ENCODE measurements at regions of chr18 and their contacts with region 1.

Region 1: DNA sequence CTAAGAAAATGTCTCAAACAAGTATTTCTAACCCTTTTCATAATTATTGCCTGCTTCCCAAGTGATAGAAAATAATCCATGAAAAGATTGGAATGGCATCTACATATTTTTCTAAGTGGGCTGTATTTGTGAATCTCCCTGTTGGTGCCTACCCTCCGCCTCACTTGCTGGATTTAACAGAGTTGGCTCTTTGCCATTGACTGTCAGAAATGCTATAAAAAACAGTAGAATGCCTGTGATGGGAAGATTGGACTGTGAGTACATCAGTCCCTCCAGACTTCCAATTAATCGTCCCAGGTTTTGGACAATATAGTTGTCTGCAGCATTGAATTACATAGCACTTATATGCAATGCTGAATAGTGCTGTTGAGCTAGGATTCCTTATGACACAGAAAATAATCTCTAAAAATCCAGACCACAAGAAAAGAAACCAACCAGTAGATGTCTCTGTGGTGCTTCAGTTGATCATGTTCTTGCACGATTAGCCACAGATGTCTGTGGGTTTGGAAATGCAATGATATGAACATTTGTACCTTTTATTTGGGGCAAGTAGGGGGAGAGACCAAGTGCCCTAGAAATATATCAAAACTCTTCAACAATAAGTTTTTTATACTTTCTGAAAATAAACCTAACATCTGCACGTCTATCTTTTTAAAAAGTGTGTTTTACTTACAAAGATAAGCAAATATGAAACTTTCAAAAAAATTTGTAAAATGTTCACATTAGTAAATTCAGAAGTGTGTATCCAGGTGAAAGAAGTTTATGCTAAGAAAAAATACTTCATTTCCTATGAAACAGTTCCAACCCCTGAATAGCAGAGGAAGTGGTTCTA is 88.5 kb downstream of the DYNAP start:
- DNase-seq: no peak
- H3K4me3 Mint-ChIP-seq: no peak overlapping the region
- H3K27ac Mint-ChIP-seq: no peak overlapping the region
- H3K4me1 Mint-ChIP-seq: peaks cover 4% of the 10 kb centered on the region
- H3K27me3 Mint-ChIP-seq: peaks cover 3% of the 10 kb centered on the region

Region 2: DNA sequence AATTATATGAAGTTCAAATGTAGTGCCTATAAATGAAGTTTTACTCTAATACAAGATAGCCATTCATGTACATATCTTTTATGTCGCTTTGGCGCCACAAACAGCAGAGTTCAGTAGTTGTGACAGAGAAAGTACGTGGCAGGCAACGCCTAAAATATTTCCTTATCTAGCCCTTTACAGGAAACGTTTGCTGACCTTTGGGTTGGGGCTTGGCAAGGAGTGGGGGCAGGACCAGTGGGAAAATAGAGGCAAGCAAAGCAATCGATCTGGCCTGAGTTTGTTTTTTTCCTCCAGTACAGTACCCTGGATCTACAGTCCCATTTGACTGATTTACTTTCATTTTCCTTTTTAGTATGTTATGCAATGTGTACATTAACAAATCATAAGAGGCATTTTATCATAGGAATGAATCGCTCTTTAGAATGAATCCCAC is 266.6 kb after region 1 on chr18:
- CTCF ChIA-PET with region 1: interaction called, 4 read pairs
- intact Hi-C with region 1: loop called (anchors 1 kb)
- DNase-seq: peak; percentile 28
- H3K4me3 Mint-ChIP-seq: peak overlapping the region; percentile 82
- H3K27ac Mint-ChIP-seq: peak overlapping the region; percentile 73
- H3K4me1 Mint-ChIP-seq: peaks cover 14% of the 10 kb centered on the region
- H3K27me3 Mint-ChIP-seq: no peaks in the 10 kb centered on the region

Region 3: DNA sequence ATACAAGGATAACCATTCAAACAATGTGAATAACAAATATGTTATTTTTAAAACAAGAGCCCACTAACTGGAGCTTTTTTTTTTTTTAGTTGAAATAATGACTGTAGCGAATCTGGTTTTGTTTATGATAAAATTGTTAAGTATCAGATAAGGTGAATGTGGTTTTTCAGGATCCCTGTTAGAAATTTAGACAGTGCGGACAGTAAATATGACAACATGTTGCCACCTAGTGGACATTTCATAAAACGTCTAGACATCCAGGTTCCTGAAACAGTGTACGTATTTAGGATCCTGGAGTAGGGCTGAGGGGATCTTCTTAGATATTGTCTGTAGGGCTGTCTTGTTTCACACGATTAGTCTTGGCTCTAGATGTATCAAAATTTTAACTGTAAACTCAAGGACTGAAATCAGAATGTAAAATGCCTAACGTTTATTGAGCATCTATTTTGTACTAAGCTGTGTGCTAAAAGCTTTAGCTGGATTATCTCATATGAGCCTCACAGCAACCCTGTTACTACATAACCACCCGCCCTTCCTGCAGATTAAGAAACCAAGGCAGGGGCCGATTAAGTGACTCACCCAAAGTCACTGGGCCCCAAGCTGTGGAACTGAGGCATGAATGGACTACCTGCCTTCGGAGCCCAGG is 303.6 kb after region 1 on chr18:
- CTCF ChIA-PET with region 1: interaction called, 16 read pairs
- intact Hi-C with region 1: loop called (anchors 1 kb)
- DNase-seq: no peak
- H3K4me3 Mint-ChIP-seq: no peak overlapping the region
- H3K27ac Mint-ChIP-seq: no peak overlapping the region
- H3K4me1 Mint-ChIP-seq: no peaks in the 10 kb centered on the region
- H3K27me3 Mint-ChIP-seq: no peaks in the 10 kb centered on the region

Measured in activated naive CD4-positive, alpha-beta T cell treated with anti-CD3 and anti-CD28 coated beads for 36 hours (primary cell).